ENCODE measurements at regions of chr13 and their contacts with region 1.

Region 1: DNA sequence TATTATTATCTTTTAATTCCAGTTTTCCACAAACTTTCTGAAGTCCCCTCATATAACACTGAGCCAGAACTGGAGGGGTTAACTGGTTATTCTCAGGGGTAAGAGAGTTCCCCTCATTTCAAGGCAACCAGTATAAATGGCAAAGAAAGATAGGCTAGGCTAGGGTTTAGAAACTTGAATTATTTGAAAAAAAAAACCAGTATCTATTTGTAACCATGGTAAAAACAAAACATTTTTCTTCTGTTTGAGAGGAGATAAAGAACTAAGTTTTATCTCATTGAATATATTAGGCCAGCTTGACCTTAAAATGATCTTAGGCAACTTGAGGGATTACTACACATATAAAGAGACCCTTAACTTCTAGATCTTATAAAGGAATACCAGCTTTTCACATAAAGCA is 19.6 kb downstream of the SUPT20H start:
- DNase-seq: peak in 3 of 4 experiments; percentile 3 to 17 (median 17)
- ATAC-seq: no peak
- H3K4me3 ChIP-seq: no peak overlapping the region
- H3K27ac ChIP-seq: no peak overlapping the region
- H3K4me1 ChIP-seq: no peaks in the 10 kb centered on the region; a peak in 1 of 5 replicates
- H3K27me3 ChIP-seq: no peaks in the 10 kb centered on the region
- CTCF ChIP-seq: no peak
- EP300 ChIP-seq: no peak
- POLR2A ChIP-seq: no peak
- RAD21 ChIP-seq: no peak

Region 2: DNA sequence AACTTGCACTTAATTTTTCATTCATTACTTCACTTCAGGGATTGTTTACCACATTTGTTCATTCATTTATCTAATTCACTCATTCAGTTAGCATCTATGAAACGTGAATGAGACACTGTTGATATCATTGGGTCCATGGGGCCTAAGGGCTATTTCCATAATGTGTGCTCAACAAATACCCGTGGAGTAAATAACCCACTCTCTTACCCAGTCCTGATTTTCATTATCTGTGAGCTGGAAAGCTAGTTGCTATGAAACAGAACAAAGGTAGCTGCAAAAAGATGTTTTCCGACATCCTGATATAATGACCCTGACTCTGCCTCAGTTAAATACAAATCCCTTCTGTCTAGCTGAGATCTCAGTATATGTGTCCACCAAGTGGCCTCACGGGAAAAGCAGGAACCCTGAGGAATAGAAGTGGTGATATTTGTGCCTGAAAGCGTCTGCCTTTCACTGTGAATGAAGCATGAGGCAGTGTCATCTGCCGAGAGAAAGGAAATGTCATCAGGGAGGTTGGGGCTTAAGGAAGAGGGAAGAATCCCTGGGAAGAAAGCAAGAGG is 302.3 kb before region 1 on chr13:
- CTCF ChIA-PET with region 1: no interaction called
- POLR2A ChIA-PET with region 1: no interaction called
- in situ Hi-C with region 1: no loop called
- intact Hi-C with region 1: no loop called
- DNase-seq: no peak
- ATAC-seq: no peak
- H3K4me3 ChIP-seq: no peak overlapping the region
- H3K27ac ChIP-seq: no peak overlapping the region
- H3K4me1 ChIP-seq: no peaks in the 10 kb centered on the region
- H3K27me3 ChIP-seq: no peaks in the 10 kb centered on the region
- CTCF ChIP-seq: no peak
- EP300 ChIP-seq: no peak
- POLR2A ChIP-seq: no peak
- RAD21 ChIP-seq: no peak

Region 3: GRCh38 chr13:37009692-37010091 is 30.2 kb before region 1 on chr13:
- CTCF ChIA-PET with region 1: no interaction called
- POLR2A ChIA-PET with region 1: interaction called, 3 read pairs
- in situ Hi-C with region 1: no loop called
- intact Hi-C with region 1: loop called (anchors 5 kb)
- DNase-seq: no peak
- ATAC-seq: peak; percentile 15; the same call in 1 of the 3 replicates
- H3K4me3 ChIP-seq: no peak overlapping the region
- H3K27ac ChIP-seq: no peak overlapping the region
- H3K4me1 ChIP-seq: no peaks in the 10 kb centered on the region
- H3K27me3 ChIP-seq: no peaks in the 10 kb centered on the region
- CTCF ChIP-seq: no peak
- EP300 ChIP-seq: no peak
- POLR2A ChIP-seq: no peak
- RAD21 ChIP-seq: no peak

Region 4: DNA sequence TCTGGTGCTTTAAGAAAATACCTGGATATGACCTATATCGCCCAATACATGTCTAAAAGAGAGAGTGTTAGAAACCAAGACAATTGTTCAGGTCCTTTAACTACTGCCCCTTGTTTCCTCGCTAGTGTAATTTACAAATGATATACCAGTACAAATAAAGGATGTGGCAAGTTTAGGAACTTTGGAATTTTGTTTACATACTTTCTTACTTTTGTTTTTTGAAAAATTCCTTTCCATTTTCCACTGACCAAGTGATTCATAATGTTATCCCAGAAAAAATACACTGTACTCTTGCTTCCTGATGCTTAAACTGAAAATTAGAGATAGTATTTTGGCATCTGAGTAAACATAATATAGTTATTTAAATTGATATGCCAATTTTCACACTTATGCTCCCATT is 162.4 kb after region 1 on chr13:
- CTCF ChIA-PET with region 1: no interaction called
- POLR2A ChIA-PET with region 1: no interaction called
- in situ Hi-C with region 1: no loop called
- intact Hi-C with region 1: no loop called
- DNase-seq: no peak
- ATAC-seq: no peak
- H3K4me3 ChIP-seq: no peak overlapping the region
- H3K27ac ChIP-seq: no peak overlapping the region
- H3K4me1 ChIP-seq: no peaks in the 10 kb centered on the region
- H3K27me3 ChIP-seq: no peaks in the 10 kb centered on the region
- CTCF ChIP-seq: no peak
- EP300 ChIP-seq: no peak
- POLR2A ChIP-seq: no peak
- RAD21 ChIP-seq: no peak